AG04450 (cell line): ENCODE measurements at regions of chr16 and their contacts with region 1.

Region 1: GRCh38 chr16:8878521-8878911 is 3.6 kb upstream of the LITAFD start:
- DNase-seq: peak; percentile 66
- H3K4me3 ChIP-seq: no peak overlapping the region
- H3K27ac ChIP-seq: peak overlapping the region; percentile 93
- H3K27me3 ChIP-seq: no peaks in the 10 kb centered on the region
- CTCF ChIP-seq: no peak

Region 2: GRCh38 chr16:8567750-8568617 is 310.5 kb before region 1 on chr16:
- CTCF ChIA-PET with region 1: interaction called, 14 read pairs
- POLR2A ChIA-PET with region 1: no interaction called
- DNase-seq: peak; percentile 74
- H3K4me3 ChIP-seq: no peak overlapping the region
- H3K27ac ChIP-seq: peak overlapping the region; percentile 21
- H3K27me3 ChIP-seq: no peaks in the 10 kb centered on the region
- CTCF ChIP-seq: peak; percentile 99

Region 3: DNA sequence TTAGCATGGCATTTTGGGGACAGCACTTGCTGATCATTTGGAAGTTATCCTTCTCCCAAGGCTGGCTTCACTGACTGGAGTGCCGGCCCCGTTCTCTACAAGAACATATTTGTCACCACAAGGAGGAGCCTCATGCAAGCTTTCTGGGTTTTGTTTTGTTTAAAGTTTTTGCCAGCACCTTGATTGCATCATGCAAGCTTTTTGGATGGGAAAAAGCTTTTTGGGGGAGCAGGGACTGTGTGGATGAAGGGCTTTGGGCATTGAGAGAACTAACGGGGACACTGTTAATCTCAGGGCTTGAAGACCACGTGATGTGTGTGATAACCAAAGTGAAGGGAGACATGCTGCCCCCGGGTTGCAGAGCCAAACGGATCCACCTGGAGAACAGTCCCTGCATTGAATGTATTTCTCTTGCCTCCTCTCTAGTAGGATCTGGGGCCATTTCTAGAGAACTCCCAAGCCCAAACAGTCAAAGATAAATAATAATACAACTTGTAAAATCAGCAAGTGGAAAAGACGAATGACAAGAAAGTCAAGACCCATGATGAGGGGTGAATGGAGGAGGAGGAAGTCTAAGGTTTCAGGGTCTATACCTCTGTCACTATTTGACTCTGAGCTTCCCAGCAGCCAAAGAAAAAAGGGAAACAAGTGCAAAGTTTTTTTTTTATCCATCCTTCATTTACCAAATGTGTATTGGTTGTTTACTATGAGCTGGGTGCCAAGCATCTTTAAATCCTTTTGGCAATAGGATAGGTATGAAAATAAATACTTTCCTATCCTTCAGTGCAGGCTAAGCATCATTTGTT is 305.4 kb before region 1 on chr16:
- CTCF ChIA-PET with region 1: interaction called, 14 read pairs
- POLR2A ChIA-PET with region 1: no interaction called
- DNase-seq: no peak
- H3K4me3 ChIP-seq: 0 out of 2 replicates have a peak overlapping the region, but pooled peaks have one; percentile 7
- H3K27ac ChIP-seq: no peak overlapping the region
- H3K27me3 ChIP-seq: peaks cover 9% of the 10 kb centered on the region
- CTCF ChIP-seq: peak; percentile 56

Region 4: DNA sequence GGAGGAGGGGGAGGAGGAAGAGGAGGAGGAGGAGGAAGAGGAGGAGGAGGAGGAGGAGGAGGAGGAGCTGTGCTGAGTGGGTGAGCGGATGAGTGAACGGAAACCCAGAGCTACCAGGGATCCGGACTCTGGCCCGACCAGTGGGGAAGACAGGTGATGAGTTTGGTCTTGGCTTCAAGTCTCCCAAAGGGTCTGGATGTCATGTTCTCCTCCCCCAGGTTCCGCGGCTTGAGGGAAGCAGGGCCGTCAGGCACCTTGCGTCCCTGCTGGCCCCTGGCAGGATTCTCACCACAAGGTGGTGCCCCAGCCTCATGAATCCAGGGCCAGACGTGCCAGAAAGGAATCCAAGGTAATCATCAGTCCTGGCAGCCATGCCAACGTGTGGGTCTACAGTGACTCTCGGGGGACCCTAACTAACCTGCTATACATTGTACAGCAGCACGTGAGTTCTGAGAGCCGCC is 217.6 kb before region 1 on chr16:
- CTCF ChIA-PET with region 1: interaction called, 31 read pairs
- POLR2A ChIA-PET with region 1: no interaction called
- DNase-seq: peak; percentile 24
- H3K4me3 ChIP-seq: no peak overlapping the region
- H3K27ac ChIP-seq: no peak overlapping the region
- H3K27me3 ChIP-seq: peaks cover 7% of the 10 kb centered on the region
- CTCF ChIP-seq: peak; percentile 83

Region 5: GRCh38 chr16:8694795-8695728 is 183.5 kb before region 1 on chr16:
- CTCF ChIA-PET with region 1: no interaction called
- POLR2A ChIA-PET with region 1: no interaction called
- DNase-seq: no peak
- H3K4me3 ChIP-seq: no peak overlapping the region
- H3K27ac ChIP-seq: no peak overlapping the region
- H3K27me3 ChIP-seq: no peaks in the 10 kb centered on the region
- CTCF ChIP-seq: no peak

Region 6: GRCh38 chr16:8768692-8769091 is 109.8 kb before region 1 on chr16:
- CTCF ChIA-PET with region 1: no interaction called
- POLR2A ChIA-PET with region 1: no interaction called
- DNase-seq: no peak
- H3K4me3 ChIP-seq: no peak overlapping the region
- H3K27ac ChIP-seq: no peak overlapping the region
- H3K27me3 ChIP-seq: no peaks in the 10 kb centered on the region
- CTCF ChIP-seq: no peak

Region 7: GRCh38 chr16:8822403-8822802 is 56.1 kb before region 1 on chr16:
- CTCF ChIA-PET with region 1: interaction called, 14 read pairs
- POLR2A ChIA-PET with region 1: no interaction called
- DNase-seq: no peak
- H3K4me3 ChIP-seq: no peak overlapping the region
- H3K27ac ChIP-seq: no peak overlapping the region
- H3K27me3 ChIP-seq: no peaks in the 10 kb centered on the region
- CTCF ChIP-seq: no peak

Region 8: DNA sequence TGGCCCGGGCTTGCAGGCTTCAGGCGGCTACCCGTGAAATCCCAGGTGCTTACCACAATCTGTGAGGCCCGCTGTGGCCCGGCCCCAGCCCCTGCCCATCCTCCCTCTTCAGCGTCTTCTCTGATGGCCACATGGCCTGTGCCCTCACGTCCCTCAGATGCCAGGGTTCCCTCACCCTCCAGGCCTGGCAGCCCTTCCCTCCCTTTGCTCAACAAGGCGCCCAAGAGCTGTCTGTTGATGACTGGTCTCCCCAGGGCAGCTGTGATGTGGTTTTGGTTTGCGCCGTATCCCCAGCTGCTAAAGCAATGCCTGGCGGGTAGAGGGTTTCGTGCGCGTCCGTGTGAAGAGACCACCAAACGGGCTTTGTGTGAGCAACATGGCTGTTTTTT is 45.8 kb before region 1 on chr16:
- CTCF ChIA-PET with region 1: no interaction called
- POLR2A ChIA-PET with region 1: no interaction called
- DNase-seq: no peak
- H3K4me3 ChIP-seq: no peak overlapping the region
- H3K27ac ChIP-seq: no peak overlapping the region
- H3K27me3 ChIP-seq: no peaks in the 10 kb centered on the region
- CTCF ChIP-seq: no peak

Region 9: GRCh38 chr16:8850279-8850885 is 28.1 kb before region 1 on chr16:
- CTCF ChIA-PET with region 1: interaction called, 17 read pairs
- POLR2A ChIA-PET with region 1: interaction called, 3 read pairs
- DNase-seq: no peak
- H3K4me3 ChIP-seq: no peak overlapping the region
- H3K27ac ChIP-seq: peak overlapping the region; percentile 65
- H3K27me3 ChIP-seq: no peaks in the 10 kb centered on the region
- CTCF ChIP-seq: no peak

Region 10: DNA sequence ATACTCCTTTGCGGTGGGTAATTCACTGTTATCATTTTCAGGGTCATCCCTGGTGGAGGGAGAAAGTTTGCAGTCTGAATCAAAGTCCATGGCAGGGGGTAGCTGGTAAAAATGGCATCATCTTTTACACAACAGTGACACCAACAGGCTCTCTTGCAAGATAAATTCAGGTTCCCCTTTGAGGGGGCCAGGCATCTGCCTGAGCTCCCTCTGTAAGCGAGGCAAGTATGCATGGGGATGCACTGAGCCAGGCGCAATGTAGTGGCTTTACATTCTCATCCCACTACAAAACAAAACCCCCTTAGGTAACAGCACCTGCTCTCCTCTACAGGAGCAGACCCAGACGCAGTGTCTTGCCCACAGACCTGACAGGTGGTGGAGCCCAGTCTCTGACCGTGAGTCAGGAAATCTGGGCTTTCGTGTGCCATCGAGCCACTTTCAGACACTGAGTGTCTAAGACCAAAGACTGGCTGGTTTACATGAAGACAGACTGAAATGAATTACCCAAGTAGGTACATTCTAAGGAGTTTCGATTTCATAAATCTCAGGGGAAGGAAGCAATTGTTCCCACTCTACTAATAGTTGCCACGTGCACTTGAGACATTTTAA is 21.3 kb after region 1 on chr16:
- CTCF ChIA-PET with region 1: interaction called, 22 read pairs
- POLR2A ChIA-PET with region 1: no interaction called
- DNase-seq: no peak
- H3K4me3 ChIP-seq: no peak overlapping the region
- H3K27ac ChIP-seq: no peak overlapping the region
- H3K27me3 ChIP-seq: no peaks in the 10 kb centered on the region
- CTCF ChIP-seq: no peak